Pancreas (tissue), 10 donors: ENCODE measurements at regions of chr3 and their contacts with region 1.

Region 1: DNA sequence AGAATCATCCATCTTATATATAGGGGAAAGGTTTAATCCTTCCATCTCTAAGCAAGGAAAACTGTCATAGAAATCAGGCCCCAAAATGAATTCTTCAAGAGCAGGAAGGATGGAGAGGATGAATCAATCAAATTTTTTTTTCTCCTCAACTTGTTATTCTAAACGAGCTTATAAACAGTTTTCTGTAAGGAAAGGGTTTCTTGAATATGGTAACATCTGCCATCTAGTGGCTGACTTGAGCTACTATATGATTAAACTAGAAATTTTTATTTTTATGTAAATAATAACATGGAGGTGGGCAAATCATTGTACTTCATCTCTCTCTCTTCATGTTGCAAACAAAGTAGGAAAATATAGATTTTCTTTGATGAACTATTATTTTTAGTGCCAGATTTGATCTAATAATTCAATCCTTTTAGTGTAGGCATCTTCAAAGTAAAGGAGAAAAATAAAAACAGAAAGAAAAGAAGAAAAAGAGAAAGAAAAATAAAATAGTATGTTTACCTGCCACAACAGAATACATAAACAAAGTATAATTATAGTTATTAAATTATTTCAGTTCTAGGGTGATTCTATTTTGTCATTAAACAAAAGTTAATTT is 146.6 kb downstream of the SERPINI1 start:
- DNase-seq: no peak
- ATAC-seq: peak; percentile 53 to 74 (median 71)
- H3K4me3 ChIP-seq: no peak overlapping the region
- H3K27ac ChIP-seq: no peak overlapping the region
- H3K4me1 ChIP-seq: peaks cover 7 to 10% (median 10%) of the 10 kb centered on the region in 3 donors
- H3K27me3 ChIP-seq: no peaks in the 10 kb centered on the region
- CTCF ChIP-seq: peak; percentile 16 to 63 (median 46)

Region 2: GRCh38 chr3:167380004-167380689 is 502.0 kb before region 1 on chr3 and contains the start of gene ZBBX:
- intact Hi-C with region 1: loop called in 1 of 3 experiments (anchors 5 kb)
- DNase-seq: peak; percentile 84 to 94 (median 92)
- ATAC-seq: peak; percentile 99 to 100 (median 99)
- H3K4me3 ChIP-seq: peak within 1 kb of the TSS in 3 of 4 donors; percentile 18 to 50 (median 24)
- H3K27ac ChIP-seq: no peak within 1 kb of the TSS
- H3K4me1 ChIP-seq: peaks cover 0 to 10% (median 4%) of the 10 kb centered on the region in 3 donors
- H3K27me3 ChIP-seq: no peaks in the 10 kb centered on the region
- CTCF ChIP-seq: peak; percentile 73 to 83 (median 79)
- total RNA-seq, gene ZBBX: not detected